ENCODE measurements at regions of chr10 and their contacts with region 1.

Region 1: GRCh38 chr10:10891124-10892082 is 126.3 kb upstream of the CELF2 start:
- DNase-seq: no peak
- H3K4me3 ChIP-seq: no peak overlapping the region
- H3K27ac ChIP-seq: no peak overlapping the region
- H3K4me1 ChIP-seq: no peaks in the 10 kb centered on the region
- H3K27me3 ChIP-seq: no peaks in the 10 kb centered on the region
- CTCF ChIP-seq: no peak
- EP300 ChIP-seq: no peak
- POLR2A ChIP-seq: no peak

Region 2: GRCh38 chr10:10722422-10722821 is 169.0 kb before region 1 on chr10:
- in situ Hi-C with region 1: no loop called
- intact Hi-C with region 1: loop called (anchors 10 kb)
- DNase-seq: no peak
- H3K4me3 ChIP-seq: no peak overlapping the region
- H3K27ac ChIP-seq: no peak overlapping the region
- H3K4me1 ChIP-seq: peaks cover 0 to 5% (median 0%) of the 10 kb centered on the region in 4 donors
- H3K27me3 ChIP-seq: no peaks in the 10 kb centered on the region
- CTCF ChIP-seq: no peak
- EP300 ChIP-seq: no peak
- POLR2A ChIP-seq: no peak

Region 3: DNA sequence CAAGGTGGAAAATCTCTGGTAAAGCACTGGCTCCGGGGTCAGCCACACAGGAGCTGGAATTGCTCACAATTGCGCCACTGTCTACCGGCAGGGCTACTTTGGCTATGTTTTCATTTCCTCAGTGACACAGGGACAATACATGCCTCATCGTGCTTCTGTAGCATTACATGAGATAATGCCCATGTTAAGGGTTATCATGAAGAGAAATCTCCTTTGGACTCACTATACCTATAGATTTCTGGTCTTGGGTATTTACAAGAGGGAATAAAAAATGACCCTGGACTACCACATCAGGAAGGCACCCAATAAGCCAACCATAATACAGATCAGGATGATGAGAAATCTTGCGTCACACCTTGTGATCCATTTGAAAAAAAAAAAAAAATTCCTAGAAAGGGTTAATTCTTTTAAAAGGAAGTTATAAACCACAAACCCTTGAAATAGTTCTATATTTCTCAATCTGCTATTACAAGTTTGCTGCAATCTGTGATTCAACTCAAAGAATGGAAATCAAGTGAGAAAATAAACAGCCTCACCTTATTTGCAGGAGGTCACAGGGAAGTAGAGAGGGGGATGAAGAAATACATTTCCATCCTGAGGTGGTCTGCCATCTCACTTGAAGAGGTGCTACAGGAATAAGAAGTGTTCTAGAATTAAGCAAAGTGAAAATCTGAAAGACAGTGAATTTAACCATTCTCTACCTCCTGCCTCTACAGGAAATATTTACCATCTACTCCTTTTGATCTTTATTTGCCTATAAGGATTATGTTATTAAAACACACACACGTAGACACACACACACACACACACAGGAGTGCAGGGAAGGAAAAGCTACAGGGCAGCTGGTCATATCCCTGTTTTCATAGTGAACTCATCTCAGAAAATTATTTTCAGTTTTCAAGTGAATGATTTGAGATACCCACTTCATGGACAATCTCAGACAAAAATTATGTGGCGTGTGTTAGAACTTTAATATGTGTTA is 105.0 kb before region 1 on chr10:
- in situ Hi-C with region 1: no loop called
- intact Hi-C with region 1: no loop called
- DNase-seq: no peak
- H3K4me3 ChIP-seq: no peak overlapping the region
- H3K27ac ChIP-seq: no peak overlapping the region
- H3K4me1 ChIP-seq: peaks cover 0 to 5% (median 0%) of the 10 kb centered on the region in 4 donors
- H3K27me3 ChIP-seq: no peaks in the 10 kb centered on the region
- CTCF ChIP-seq: no peak
- EP300 ChIP-seq: no peak
- POLR2A ChIP-seq: no peak